ENCODE measurements at regions of chr13 and their contacts with region 1.

Region 1: GRCh38 chr13:46052319-46053161 is at the start of gene ZC3H13:
- DNase-seq: peak; percentile 96
- H3K4me3 Mint-ChIP-seq: peak within 1 kb of the TSS; percentile 90
- H3K27ac Mint-ChIP-seq: peak within 1 kb of the TSS; percentile 93
- H3K4me1 Mint-ChIP-seq: peaks cover 28% of the 10 kb centered on the region
- H3K27me3 Mint-ChIP-seq: peaks cover 8% of the 10 kb centered on the region
- total RNA-seq, gene ZC3H13: 37.0 to 47.3 TPM

Region 2: GRCh38 chr13:46079770-46080169 is 27.2 kb after region 1 on chr13:
- CTCF ChIA-PET with region 1: no interaction called
- POLR2A ChIA-PET with region 1: no interaction called
- intact Hi-C with region 1: no loop called
- DNase-seq: no peak
- H3K4me3 Mint-ChIP-seq: no peak overlapping the region
- H3K27ac Mint-ChIP-seq: no peak overlapping the region
- H3K4me1 Mint-ChIP-seq: peaks cover 20% of the 10 kb centered on the region
- H3K27me3 Mint-ChIP-seq: peaks cover under 1% of the 10 kb centered on the region

Region 3: DNA sequence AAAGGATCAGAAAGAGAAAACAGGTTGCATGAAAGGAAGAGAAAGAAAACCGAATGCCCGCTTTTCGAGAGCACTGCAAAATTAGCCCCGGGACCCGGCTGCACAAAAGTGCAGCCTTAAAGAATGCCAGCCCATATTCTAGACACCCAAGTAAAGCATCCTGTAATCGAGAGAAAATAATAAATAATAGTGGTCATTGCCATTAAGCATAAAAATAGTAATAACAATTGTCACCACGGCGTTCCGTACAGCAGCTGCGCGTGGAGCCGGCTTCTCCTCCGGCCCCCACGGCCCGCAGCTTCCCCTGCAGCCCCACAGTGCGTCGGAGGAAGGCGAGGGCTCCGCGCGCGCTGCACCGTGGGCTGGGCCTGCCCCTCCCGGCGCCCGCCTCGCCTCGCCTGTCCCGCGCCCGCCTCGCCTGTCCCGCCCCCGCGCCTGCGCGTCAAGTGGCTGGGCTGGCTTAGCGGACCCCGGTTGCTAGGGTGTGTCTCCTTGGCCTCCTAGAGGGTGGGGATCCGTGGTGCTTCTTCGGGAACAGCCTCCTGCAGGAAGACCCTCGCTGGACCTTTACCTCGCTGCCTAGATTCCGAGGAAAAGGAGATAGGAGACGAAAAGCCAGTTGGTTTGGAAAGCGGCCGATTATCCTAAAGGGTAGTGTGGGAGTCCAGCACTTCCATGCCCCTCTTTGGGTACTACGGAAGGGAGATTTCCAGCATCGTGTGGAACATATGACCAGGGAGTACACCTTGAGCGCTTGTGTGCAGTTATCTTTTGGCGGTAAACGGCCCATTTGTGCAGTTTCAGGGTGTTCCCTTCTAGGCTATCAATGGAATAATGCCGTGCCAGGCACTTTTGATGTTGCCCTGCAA is 159.2 kb after region 1 on chr13 and contains the start of gene LRRC63:
- CTCF ChIA-PET with region 1: no interaction called
- POLR2A ChIA-PET with region 1: no interaction called
- intact Hi-C with region 1: loop called (anchors 5 kb)
- DNase-seq: peak; percentile 89
- H3K4me3 Mint-ChIP-seq: peak within 1 kb of the TSS; percentile 85
- H3K27ac Mint-ChIP-seq: peak within 1 kb of the TSS; percentile 74
- H3K4me1 Mint-ChIP-seq: peaks cover 21% of the 10 kb centered on the region
- H3K27me3 Mint-ChIP-seq: no peaks in the 10 kb centered on the region
- total RNA-seq, gene LRRC63: 0.45 to 0.63 TPM

Measured in activated CD4-positive, alpha-beta memory T cell treated with anti-CD3 and anti-CD28 coated beads for 36 hours (primary cell).